ENCODE measurements at regions of chr22 and their contacts with region 1.

Region 1: DNA sequence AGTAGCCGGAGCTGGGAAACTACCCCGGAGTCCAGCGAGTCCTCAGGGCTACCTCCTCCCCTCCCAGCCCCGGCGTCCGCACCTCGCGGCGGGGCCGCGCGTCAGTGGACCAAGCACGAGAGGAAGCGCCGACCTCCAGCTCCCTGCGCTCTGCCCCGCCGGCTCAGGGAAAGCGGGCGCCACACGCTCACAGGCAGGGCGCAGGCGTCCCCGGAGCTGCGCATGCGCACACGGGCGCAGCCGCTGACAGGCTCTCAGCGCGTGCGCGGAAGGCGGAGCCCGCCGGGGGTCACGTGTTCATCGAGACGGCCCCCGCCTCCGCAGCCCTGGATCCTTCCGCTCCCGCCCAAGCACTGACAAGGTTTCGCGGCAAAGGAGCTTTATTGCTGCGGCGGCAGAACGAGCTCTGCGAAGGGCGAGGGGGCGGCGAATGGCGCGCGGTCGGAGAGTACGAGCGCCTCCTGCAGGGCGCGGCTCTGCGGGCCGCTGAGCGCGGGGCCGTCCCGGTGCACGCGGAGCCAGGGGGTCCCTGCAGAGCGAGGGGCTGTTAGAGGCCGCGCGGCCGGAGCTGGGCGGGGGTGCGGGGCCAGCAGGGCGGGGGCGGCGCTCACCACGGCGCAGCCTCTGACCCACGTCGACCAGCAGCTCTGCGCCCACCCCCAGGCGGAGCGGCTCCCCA is at the start of gene SCO2:
- DNase-seq: peak; percentile 97
- H3K4me3 Mint-ChIP-seq: peak within 1 kb of the TSS; percentile 80
- H3K27ac Mint-ChIP-seq: peak within 1 kb of the TSS; percentile 93
- H3K4me1 Mint-ChIP-seq: peaks cover 37% of the 10 kb centered on the region
- H3K27me3 Mint-ChIP-seq: no peaks in the 10 kb centered on the region
- total RNA-seq, gene SCO2: 2.8 to 10.5 TPM

Region 2: GRCh38 chr22:50218996-50219727 is 306.4 kb before region 1 on chr22:
- CTCF ChIA-PET with region 1: no interaction called
- POLR2A ChIA-PET with region 1: no interaction called
- DNase-seq: no peak
- H3K4me3 Mint-ChIP-seq: no peak overlapping the region
- H3K27ac Mint-ChIP-seq: no peak overlapping the region
- H3K4me1 Mint-ChIP-seq: no peaks in the 10 kb centered on the region
- H3K27me3 Mint-ChIP-seq: no peaks in the 10 kb centered on the region

Region 3: DNA sequence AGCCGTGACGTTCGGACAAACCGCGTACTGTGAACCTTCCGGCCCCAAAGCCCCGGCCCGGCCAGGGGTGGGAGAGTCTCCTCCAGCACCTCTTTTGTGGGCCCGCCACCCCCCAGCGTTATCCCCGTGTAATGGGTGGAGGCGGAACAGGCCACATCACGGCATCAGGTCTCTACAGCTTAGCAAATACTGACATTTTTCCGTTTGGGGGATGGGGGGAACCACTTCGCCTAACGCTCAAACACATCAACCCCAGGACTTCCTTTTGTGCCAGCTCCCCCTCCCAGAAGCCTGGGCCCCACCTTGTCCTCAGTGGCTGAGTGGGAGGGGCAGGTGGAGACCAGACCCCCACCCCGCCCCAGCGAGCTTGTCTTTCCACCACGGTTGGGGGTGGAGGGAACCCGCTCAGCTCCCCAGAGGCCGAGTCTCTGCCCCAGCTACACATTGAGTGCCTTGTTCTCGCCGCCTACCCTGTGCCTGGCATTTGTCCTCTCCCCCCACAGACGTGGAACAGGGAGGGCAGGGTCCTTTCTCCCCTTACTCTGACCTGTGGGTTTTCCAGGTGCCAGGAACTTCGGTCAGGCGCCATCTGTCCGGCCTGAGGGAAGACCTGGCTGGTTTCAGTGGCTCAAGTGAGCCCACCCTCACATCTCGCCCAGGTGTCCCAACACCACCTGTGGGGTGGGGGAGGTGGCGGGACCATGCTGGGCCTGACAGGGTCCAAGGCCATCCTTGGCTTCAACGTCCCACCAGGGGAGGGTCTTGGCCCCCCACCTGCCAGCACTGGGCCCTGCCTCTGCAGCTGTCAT is 80.3 kb before region 1 on chr22:
- CTCF ChIA-PET with region 1: no interaction called
- POLR2A ChIA-PET with region 1: no interaction called
- DNase-seq: no peak
- H3K4me3 Mint-ChIP-seq: peak overlapping the region; percentile 30
- H3K27ac Mint-ChIP-seq: peak overlapping the region; percentile 81
- H3K4me1 Mint-ChIP-seq: peaks cover 20% of the 10 kb centered on the region
- H3K27me3 Mint-ChIP-seq: no peaks in the 10 kb centered on the region

Region 4: GRCh38 chr22:50469377-50470305 is 55.9 kb before region 1 on chr22:
- CTCF ChIA-PET with region 1: interaction called, 10 read pairs
- POLR2A ChIA-PET with region 1: interaction called, 4 read pairs
- DNase-seq: peak; percentile 98
- H3K4me3 Mint-ChIP-seq: peak overlapping the region; percentile 67
- H3K27ac Mint-ChIP-seq: peak overlapping the region; percentile 97
- H3K4me1 Mint-ChIP-seq: peaks cover 71% of the 10 kb centered on the region
- H3K27me3 Mint-ChIP-seq: no peaks in the 10 kb centered on the region

Region 5: DNA sequence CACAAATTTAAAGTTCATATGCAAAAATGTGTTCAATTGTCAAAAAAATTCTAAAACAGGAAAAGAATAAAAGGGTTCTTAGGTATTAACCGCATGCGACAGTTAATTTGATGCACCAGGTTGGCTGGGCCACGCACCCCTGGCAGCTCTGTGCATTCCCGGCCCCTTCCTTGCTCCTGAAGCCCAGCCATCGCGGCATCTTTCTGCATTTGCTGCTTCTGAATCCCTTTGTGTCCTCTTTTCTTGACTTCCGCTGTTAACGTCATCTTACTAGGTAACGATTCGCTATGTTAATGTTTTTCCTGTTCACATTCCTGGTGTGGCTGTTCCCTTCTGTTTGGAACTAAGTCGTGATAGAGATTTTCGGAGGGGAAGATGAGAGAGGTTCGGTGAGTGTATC is 12.2 kb after region 1 on chr22:
- CTCF ChIA-PET with region 1: interaction called, 63 read pairs
- POLR2A ChIA-PET with region 1: interaction called, 15 read pairs
- DNase-seq: no peak
- H3K4me3 Mint-ChIP-seq: no peak overlapping the region
- H3K27ac Mint-ChIP-seq: no peak overlapping the region
- H3K4me1 Mint-ChIP-seq: peaks cover 80% of the 10 kb centered on the region
- H3K27me3 Mint-ChIP-seq: no peaks in the 10 kb centered on the region

Region 6: GRCh38 chr22:50562523-50563412 is 37.2 kb after region 1 on chr22 and contains the start of gene SYCE3:
- CTCF ChIA-PET with region 1: interaction called, 74 read pairs
- POLR2A ChIA-PET with region 1: interaction called, 4 read pairs
- DNase-seq: peak; percentile 97
- H3K4me3 Mint-ChIP-seq: peak within 1 kb of the TSS; percentile 80
- H3K27ac Mint-ChIP-seq: peak within 1 kb of the TSS; percentile 85
- H3K4me1 Mint-ChIP-seq: peaks cover 24% of the 10 kb centered on the region
- H3K27me3 Mint-ChIP-seq: peaks cover 15% of the 10 kb centered on the region
- total RNA-seq, gene SYCE3: 0.87 TPM in 1 of 2 experiments, not detected in the other

Region 7: GRCh38 chr22:50620593-50621355 is 95.2 kb after region 1 on chr22:
- CTCF ChIA-PET with region 1: interaction called, 37 read pairs
- POLR2A ChIA-PET with region 1: interaction called, 19 read pairs
- DNase-seq: peak; percentile 88
- H3K4me3 Mint-ChIP-seq: peak overlapping the region; percentile 82
- H3K27ac Mint-ChIP-seq: peak overlapping the region; percentile 100
- H3K4me1 Mint-ChIP-seq: peaks cover 48% of the 10 kb centered on the region
- H3K27me3 Mint-ChIP-seq: peaks cover 1% of the 10 kb centered on the region